ENCODE measurements at regions of chr7 and their contacts with region 1.

Region 1: GRCh38 chr7:70693686-70694360 is 438.1 kb upstream of the GALNT17 start:
- DNase-seq: peak; percentile 87 to 90 (median 89)
- ATAC-seq: peak; percentile 77 to 91 (median 82)
- H3K4me3 ChIP-seq: peak overlapping the region; percentile 74 to 79 (median 74)
- H3K27ac ChIP-seq: peak overlapping the region; percentile 19 to 82 (median 47)
- H3K4me1 ChIP-seq: peaks cover 0 to 22% (median 0%) of the 10 kb centered on the region in 4 donors
- H3K27me3 ChIP-seq: no peaks in the 10 kb centered on the region
- CTCF ChIP-seq: peak in 1 of 4 donors; percentile 18
- POLR2A ChIP-seq: peak; percentile 77

Region 2: DNA sequence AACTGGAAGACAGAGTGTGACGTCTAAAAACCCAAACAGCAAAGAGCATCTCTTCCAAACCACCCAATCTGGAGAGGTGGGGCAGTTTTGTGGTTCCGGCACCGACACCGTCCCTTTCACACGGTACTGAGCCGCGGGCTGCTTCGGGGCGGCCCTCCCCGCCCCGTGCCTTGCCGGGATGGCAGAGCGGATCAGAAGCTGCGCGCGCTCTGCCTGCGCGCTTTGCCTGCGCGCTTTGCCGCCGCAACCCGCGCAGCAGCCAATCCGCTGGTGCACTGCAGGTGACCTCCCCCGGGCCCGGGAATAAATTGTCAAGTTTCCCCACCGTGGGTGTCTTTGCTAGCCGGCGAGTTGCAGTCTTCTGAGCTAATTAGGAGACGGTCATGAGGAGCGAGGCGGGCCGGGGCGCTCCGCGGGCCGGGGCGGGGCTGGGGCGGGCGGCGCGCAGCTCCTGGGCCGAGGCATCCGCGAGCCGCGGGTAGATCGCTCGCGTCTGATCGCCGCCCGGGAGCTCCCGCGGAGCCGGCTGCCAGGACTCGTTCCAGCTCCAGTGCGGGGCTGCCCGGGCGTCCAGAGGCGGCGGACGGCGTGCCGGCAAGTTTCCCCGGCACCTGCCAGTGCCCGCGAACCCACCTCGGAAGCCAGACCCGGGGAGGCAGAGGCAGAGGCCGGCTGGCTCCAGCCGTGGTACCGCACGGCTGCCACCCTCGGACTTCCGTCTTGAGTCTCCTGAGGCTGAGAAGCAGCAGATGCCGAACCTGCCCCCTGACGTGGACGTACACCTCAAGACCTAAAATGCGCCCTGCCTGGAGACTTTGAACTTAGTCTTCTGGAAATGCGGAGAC is 97.8 kb before region 1 on chr7:
- intact Hi-C with region 1: loop called in 1 of 2 experiments (anchors 10 kb)
- DNase-seq: peak; percentile 39 to 65 (median 54)
- ATAC-seq: peak; percentile 50 to 73 (median 72)
- H3K4me3 ChIP-seq: peak overlapping the region; percentile 39 to 65 (median 58)
- H3K27ac ChIP-seq: peak overlapping the region in 1 of 3 donors; percentile 38
- H3K4me1 ChIP-seq: peaks cover 0 to 34% (median 4%) of the 10 kb centered on the region in 4 donors
- H3K27me3 ChIP-seq: no peaks in the 10 kb centered on the region
- CTCF ChIP-seq: no peak
- POLR2A ChIP-seq: no peak

Region 3: GRCh38 chr7:70614237-70615045 is 79.4 kb before region 1 on chr7:
- intact Hi-C with region 1: no loop called
- DNase-seq: peak; percentile 82 to 92 (median 89)
- ATAC-seq: peak; percentile 96 to 99 (median 98)
- H3K4me3 ChIP-seq: peak overlapping the region in 1 of 3 donors; percentile 36
- H3K27ac ChIP-seq: peak overlapping the region in 1 of 3 donors; percentile 21
- H3K4me1 ChIP-seq: peaks cover 0 to 8% (median 3%) of the 10 kb centered on the region in 4 donors
- H3K27me3 ChIP-seq: no peaks in the 10 kb centered on the region
- CTCF ChIP-seq: no peak
- POLR2A ChIP-seq: peak; percentile 18

Region 4: DNA sequence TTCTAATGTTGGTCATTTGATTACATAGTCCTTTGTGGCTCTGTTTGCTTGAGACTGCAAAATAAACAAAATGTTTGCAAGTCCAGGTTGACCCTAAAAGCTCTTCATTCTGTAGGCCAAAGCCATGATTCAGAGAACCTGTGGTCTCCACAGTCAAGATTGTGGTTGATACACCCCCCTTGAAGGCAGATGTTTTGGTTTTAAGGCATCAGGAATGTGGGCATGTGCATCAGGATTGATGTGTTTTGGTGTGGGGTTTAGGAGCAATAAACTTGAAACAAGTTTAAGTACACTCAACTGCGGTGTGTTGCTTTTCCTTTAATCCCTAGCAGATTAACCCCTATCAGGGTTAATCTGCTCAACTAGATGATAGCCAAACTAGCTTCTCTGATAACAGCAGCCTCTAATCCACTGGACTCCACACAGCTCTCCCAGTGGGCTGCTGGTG is 59.0 kb after region 1 on chr7:
- intact Hi-C with region 1: no loop called
- DNase-seq: no peak
- ATAC-seq: peak; percentile 84 to 91 (median 88)
- H3K4me3 ChIP-seq: no peak overlapping the region
- H3K27ac ChIP-seq: peak overlapping the region in 2 of 3 donors; percentile 18 to 59
- H3K4me1 ChIP-seq: peaks cover 0 to 28% (median 12%) of the 10 kb centered on the region in 4 donors
- H3K27me3 ChIP-seq: no peaks in the 10 kb centered on the region
- CTCF ChIP-seq: no peak
- POLR2A ChIP-seq: no peak

Measured in right lobe of liver (tissue), 6 donors.